Tibial artery (tissue), 4 donors: ENCODE measurements at regions of chr18 and their contacts with region 1.

Region 1: GRCh38 chr18:7329016-7329415 is 98.1 kb downstream of the LRRC30 start:
- DNase-seq: no peak
- H3K4me3 ChIP-seq: no peak overlapping the region
- H3K27ac ChIP-seq: no peak overlapping the region
- H3K4me1 ChIP-seq: no peaks in the 10 kb centered on the region
- H3K27me3 ChIP-seq: no peaks in the 10 kb centered on the region
- CTCF ChIP-seq: no peak

Region 2: GRCh38 chr18:7317804-7318231 is 11.2 kb before region 1 on chr18:
- intact Hi-C with region 1: loop called (anchors 1 kb)
- DNase-seq: no peak
- H3K4me3 ChIP-seq: no peak overlapping the region
- H3K27ac ChIP-seq: no peak overlapping the region
- H3K4me1 ChIP-seq: no peaks in the 10 kb centered on the region
- H3K27me3 ChIP-seq: no peaks in the 10 kb centered on the region
- CTCF ChIP-seq: no peak